ENCODE measurements at regions of chr1 and their contacts with region 1.

Region 1: DNA sequence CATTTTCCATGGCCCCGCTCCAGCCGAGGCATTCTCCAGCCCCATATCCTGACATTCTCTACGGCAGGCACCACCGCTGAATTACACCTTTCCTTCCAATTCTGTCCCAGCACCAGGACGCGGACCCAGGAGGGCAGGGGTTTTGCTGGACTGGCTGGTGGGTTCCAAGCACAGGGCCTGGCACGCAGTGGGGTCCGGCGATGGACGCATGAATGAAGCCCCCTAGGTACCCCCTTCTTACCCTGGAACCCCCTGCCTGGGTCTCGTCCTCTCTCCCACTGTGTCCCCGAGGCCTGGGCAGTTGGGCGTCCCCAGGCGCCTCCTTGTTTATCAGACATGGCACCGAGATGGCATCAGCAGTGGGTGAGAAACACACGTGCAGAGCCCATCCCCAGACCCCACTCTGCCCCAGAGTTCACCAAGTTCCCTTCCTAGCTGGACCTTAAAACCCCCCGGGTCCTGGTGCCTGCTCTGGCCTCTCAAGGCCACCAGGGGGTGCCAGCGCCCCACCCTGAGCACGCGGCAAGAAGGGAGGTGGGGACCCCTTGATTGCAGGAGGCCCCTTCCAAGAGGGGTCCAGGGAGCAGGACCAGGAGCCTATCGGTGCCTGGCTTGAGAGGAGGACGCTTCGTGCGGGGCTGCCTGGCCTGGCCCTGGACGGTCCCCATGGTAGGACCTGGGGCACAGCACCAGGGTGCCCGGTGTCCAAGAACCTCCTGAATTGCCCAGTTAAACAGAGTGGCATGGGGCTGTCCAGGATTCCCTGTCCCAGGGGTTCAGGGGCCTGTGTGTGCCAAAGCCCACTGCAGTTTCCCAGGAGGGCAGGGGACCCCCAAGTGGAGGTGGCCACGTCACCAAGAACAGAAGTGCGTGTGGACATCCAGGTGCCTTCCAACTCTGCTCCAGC is 46.1 kb downstream of the MEGF6 start:
- DNase-seq: peak; percentile 31 to 87
- H3K4me3 ChIP-seq: no peak overlapping the region
- H3K27ac ChIP-seq: no peak overlapping the region
- H3K4me1 ChIP-seq: no peaks in the 10 kb centered on the region
- H3K27me3 ChIP-seq: no peaks in the 10 kb centered on the region
- CTCF ChIP-seq: peak in 2 of 3 experiments; percentile 95 to 97; a peak in 3 of 4 replicates
- EP300 ChIP-seq: no peak
- POLR2A ChIP-seq: no peak
- RAD21 ChIP-seq: peak; percentile 97 to 98

Region 2: GRCh38 chr1:3417082-3417739 is 148.0 kb before region 1 on chr1:
- CTCF ChIA-PET with region 1: no interaction called
- POLR2A ChIA-PET with region 1: no interaction called
- DNase-seq: no peak
- H3K4me3 ChIP-seq: no peak overlapping the region
- H3K27ac ChIP-seq: no peak overlapping the region
- H3K4me1 ChIP-seq: no peaks in the 10 kb centered on the region; a peak in 1 of 7 replicates
- H3K27me3 ChIP-seq: no peaks in the 10 kb centered on the region
- CTCF ChIP-seq: peak in 2 of 3 experiments; percentile 41 to 45; a peak in 3 of 4 replicates
- EP300 ChIP-seq: no peak
- POLR2A ChIP-seq: no peak
- RAD21 ChIP-seq: no peak; a peak in 1 of 4 replicates

Region 3: GRCh38 chr1:3543076-3544039 is 21.8 kb before region 1 on chr1:
- CTCF ChIA-PET with region 1: interaction called, 73 read pairs
- POLR2A ChIA-PET with region 1: no interaction called
- DNase-seq: peak in 1 of 2 experiments; percentile 71
- H3K4me3 ChIP-seq: no peak overlapping the region
- H3K27ac ChIP-seq: no peak overlapping the region
- H3K4me1 ChIP-seq: peaks cover 0 to 17% (median 4%) of the 10 kb centered on the region in 4 experiments; a peak in 5 of 7 replicates
- H3K27me3 ChIP-seq: peaks cover 0 to 6% (median 0%) of the 10 kb centered on the region in 4 experiments; a peak in 1 of 7 replicates
- CTCF ChIP-seq: no peak
- EP300 ChIP-seq: no peak
- POLR2A ChIP-seq: no peak
- RAD21 ChIP-seq: no peak

Region 4: DNA sequence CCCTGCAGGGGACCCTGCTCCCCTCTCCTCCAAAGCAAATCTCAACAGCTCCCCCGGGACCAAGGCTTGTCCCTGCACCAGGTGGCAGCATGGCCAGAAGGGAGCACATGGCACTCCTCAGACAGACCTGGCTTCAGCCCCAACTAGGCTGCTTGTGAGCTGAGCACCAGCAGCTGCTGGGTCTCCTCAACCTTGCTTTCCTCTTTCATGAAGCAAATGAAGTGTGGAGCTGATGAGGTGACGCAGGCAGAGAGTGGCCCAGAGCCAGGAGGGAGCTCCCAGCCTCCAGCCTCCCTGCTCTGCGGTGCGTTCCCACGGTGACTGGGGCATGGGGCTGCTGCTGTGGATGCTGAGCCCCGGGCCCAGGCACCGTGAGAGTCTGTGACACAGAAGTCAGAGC is 12.1 kb after region 1 on chr1:
- CTCF ChIA-PET with region 1: interaction called, 56 read pairs
- POLR2A ChIA-PET with region 1: no interaction called
- DNase-seq: no peak
- H3K4me3 ChIP-seq: no peak overlapping the region
- H3K27ac ChIP-seq: no peak overlapping the region
- H3K4me1 ChIP-seq: no peaks in the 10 kb centered on the region; a peak in 1 of 7 replicates
- H3K27me3 ChIP-seq: no peaks in the 10 kb centered on the region
- CTCF ChIP-seq: no peak
- EP300 ChIP-seq: no peak
- POLR2A ChIP-seq: no peak
- RAD21 ChIP-seq: no peak

Region 5: GRCh38 chr1:3624200-3625136 is 59.3 kb after region 1 on chr1 and contains the start of gene TPRG1L:
- CTCF ChIA-PET with region 1: interaction called, 148 read pairs
- POLR2A ChIA-PET with region 1: no interaction called
- DNase-seq: peak; percentile 82 to 99
- H3K4me3 ChIP-seq: peak within 1 kb of the TSS; percentile 77 to 90 (median 86)
- H3K27ac ChIP-seq: no peak within 1 kb of the TSS
- H3K4me1 ChIP-seq: peaks cover 0 to 12% (median 2%) of the 10 kb centered on the region in 4 experiments; a peak in 6 of 7 replicates
- H3K27me3 ChIP-seq: no peaks in the 10 kb centered on the region
- CTCF ChIP-seq: no peak
- EP300 ChIP-seq: no peak
- POLR2A ChIP-seq: no peak
- RAD21 ChIP-seq: no peak
- total RNA-seq, gene TPRG1L: 21.7 and 22.2 TPM in 2 replicates